Naive thymus-derived CD4-positive, alpha-beta T cell (primary cell): ENCODE measurements at regions of chr12 and their contacts with region 1.

Region 1: GRCh38 chr12:25052196-25052913 is 103.5 kb upstream of the BCAT1 start:
- DNase-seq: peak in 8 of 9 donors; percentile 51 to 92 (median 87)
- ATAC-seq: peak; percentile 85
- H3K4me3 ChIP-seq: peak overlapping the region; percentile 94
- H3K4me3 Mint-ChIP-seq: peak overlapping the region; percentile 88 to 100 (median 95)
- H3K27ac ChIP-seq: peak overlapping the region; percentile 76
- H3K27ac Mint-ChIP-seq: peak overlapping the region; percentile 92 to 100 (median 99)
- H3K4me1 ChIP-seq: peaks cover 22 to 25% of the 10 kb centered on the region in 2 donors
- H3K4me1 Mint-ChIP-seq: peaks cover 29 to 50% (median 42%) of the 10 kb centered on the region in 7 donors
- H3K27me3 ChIP-seq: no peaks in the 10 kb centered on the region
- H3K27me3 Mint-ChIP-seq: peaks cover 0 to 3% (median 0%) of the 10 kb centered on the region in 5 donors

Region 2: DNA sequence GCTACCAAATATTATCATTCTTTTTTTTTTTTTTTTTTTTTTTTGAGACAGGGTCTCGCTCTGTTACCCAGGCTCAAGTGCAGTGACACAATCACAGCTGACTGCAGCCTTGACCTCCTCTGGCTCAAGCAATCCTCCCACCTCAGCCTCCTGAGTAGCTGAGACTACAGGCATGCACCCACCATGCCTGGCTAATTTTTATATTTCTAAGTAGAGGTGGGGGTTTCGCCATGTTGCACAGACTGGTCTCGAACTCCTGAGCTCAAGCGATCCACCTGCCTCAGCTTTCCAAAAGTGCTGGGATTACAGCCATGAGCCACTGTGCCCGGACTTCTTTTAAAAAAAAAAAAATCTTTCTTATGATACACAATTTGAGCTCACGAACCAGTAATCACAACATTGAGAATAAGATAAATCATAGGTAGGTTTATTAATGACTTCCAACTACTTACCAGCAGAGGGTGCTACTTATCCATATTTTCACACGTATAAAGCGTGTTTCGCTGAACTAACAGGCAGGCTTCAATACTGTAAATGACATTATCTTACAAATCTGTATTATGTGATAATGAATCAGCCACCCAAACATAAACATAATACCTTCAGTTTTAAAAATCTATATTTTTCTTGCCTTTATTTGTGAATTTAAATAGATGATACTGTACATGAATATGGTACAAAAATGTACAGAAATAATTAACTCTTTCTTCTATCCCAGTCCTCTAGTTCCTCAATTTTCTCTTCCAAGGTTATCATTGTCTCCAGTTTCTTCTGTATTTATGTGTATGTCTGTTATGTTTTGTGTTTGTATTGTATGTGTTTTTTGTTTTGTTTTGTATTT is 60.9 kb before region 1 on chr12:
- CTCF ChIA-PET with region 1: interaction called, 3 read pairs
- POLR2A ChIA-PET with region 1: no interaction called
- intact Hi-C with region 1: loop called (anchors 1 to 2 kb)
- DNase-seq: peak in 7 of 9 donors; percentile 53 to 75 (median 64)
- ATAC-seq: peak; percentile 97
- H3K4me3 ChIP-seq: no peak overlapping the region
- H3K4me3 Mint-ChIP-seq: no peak overlapping the region
- H3K27ac ChIP-seq: no peak overlapping the region
- H3K27ac Mint-ChIP-seq: no peak overlapping the region
- H3K4me1 ChIP-seq: no peaks in the 10 kb centered on the region
- H3K4me1 Mint-ChIP-seq: peaks cover 0 to 2% (median 0%) of the 10 kb centered on the region in 7 donors
- H3K27me3 ChIP-seq: no peaks in the 10 kb centered on the region
- H3K27me3 Mint-ChIP-seq: peaks cover 0 to 7% (median 6%) of the 10 kb centered on the region in 5 donors

Region 3: GRCh38 chr12:25072906-25073650 is 20.7 kb after region 1 on chr12:
- CTCF ChIA-PET with region 1: interaction called, 4 read pairs
- POLR2A ChIA-PET with region 1: interaction called, 12 read pairs
- intact Hi-C with region 1: loop called (anchors 1 to 2 kb)
- DNase-seq: no peak
- ATAC-seq: no peak
- H3K4me3 ChIP-seq: no peak overlapping the region
- H3K4me3 Mint-ChIP-seq: no peak overlapping the region
- H3K27ac ChIP-seq: no peak overlapping the region
- H3K27ac Mint-ChIP-seq: no peak overlapping the region
- H3K4me1 ChIP-seq: no peaks in the 10 kb centered on the region
- H3K4me1 Mint-ChIP-seq: peaks cover 19 to 38% (median 23%) of the 10 kb centered on the region in 7 donors
- H3K27me3 ChIP-seq: no peaks in the 10 kb centered on the region
- H3K27me3 Mint-ChIP-seq: no peaks in the 10 kb centered on the region

Region 4: DNA sequence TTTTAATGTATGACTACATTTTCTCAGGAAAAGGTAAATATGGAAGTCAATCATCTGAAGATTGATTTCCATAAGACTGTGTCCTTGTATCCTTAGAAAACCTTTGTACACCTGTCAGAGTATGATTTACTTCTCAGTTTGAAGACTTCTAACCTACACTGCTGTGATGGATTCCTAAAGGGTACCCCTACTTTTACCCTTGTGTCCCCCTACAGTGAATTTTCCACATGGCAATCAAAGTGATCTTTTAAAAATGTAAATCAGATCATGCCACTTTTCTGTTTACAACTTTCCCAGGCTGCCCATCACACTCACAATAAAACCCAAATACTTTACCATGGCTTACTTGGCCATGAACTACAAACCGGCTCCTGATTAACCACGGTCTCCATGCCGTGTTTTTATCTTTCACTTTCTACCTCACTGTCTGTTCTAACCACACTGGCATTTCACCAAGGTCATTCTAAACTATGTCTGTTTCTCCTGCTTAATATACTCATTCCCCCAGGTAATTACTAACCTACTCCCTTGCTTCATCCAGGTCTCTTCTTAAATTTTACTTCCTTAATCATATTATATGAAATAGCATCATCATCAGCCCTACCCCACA is 134.5 kb after region 1 on chr12:
- CTCF ChIA-PET with region 1: no interaction called
- POLR2A ChIA-PET with region 1: interaction called, 6 read pairs
- intact Hi-C with region 1: loop called in 1 of 2 experiments (anchors 2 kb)
- DNase-seq: peak in 4 of 9 donors; percentile 20 to 37 (median 29)
- ATAC-seq: peak; percentile 74
- H3K4me3 ChIP-seq: peak overlapping the region; percentile 54
- H3K4me3 Mint-ChIP-seq: peak overlapping the region; percentile 77 to 93 (median 90)
- H3K27ac ChIP-seq: peak overlapping the region; percentile 54
- H3K27ac Mint-ChIP-seq: peak overlapping the region; percentile 72 to 99 (median 96)
- H3K4me1 ChIP-seq: peaks cover 3 to 16% of the 10 kb centered on the region in 2 donors
- H3K4me1 Mint-ChIP-seq: peaks cover 9 to 21% (median 18%) of the 10 kb centered on the region in 7 donors
- H3K27me3 ChIP-seq: no peaks in the 10 kb centered on the region
- H3K27me3 Mint-ChIP-seq: peaks cover 0 to 2% (median 0%) of the 10 kb centered on the region in 5 donors

Region 5: DNA sequence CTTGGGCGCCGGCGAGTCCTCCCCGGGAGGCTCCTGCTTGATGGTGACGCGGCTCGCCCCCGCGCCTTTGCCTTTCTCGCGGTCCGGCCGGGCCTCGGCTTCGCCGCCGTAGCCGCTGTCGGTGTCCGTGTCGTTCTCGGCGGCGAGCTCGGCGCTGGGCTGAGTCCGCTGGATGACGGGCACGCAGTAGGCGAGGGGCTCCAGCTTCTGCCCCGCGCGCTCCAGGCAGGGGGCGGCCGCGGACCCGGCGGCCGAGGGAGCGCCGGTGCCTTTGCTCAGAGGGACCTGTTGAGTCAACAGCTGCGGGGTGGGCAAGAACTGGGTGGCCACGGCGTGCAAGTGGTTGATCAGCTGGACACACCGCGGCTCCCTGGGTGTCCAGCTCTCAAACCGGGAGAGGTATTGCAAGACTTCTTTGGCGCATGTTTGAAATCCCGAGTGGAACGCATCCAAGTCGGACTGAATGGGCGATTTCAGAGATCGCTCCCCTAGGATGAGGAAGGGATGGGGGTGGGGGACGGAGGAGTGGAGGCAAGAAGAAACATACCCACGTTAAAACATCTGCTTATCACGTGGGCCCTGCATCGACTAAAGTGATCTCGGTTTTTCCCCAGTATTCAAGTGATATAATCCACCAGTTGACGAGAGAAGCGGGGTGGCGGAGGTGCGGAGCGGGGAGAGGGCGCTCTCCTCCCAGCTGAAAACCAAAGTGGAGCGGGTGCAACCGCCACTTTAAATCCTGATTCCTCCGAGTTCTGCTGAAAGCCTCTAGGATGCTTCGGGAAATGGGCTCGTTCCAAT is 1070.5 kb after region 1 on chr12:
- CTCF ChIA-PET with region 1: no interaction called
- POLR2A ChIA-PET with region 1: no interaction called
- intact Hi-C with region 1: loop called in 1 of 2 experiments (anchors 5 kb)
- DNase-seq: peak in 7 of 9 donors; percentile 16 to 51 (median 22)
- ATAC-seq: peak; percentile 44
- H3K4me3 ChIP-seq: peak overlapping the region; percentile 39
- H3K4me3 Mint-ChIP-seq: peak overlapping the region; percentile 80 to 91 (median 88)
- H3K27ac ChIP-seq: no peak overlapping the region
- H3K27ac Mint-ChIP-seq: peak overlapping the region in 3 of 9 donors; percentile 46 to 75 (median 58)
- H3K4me1 ChIP-seq: peaks cover 12 to 21% of the 10 kb centered on the region in 2 donors
- H3K4me1 Mint-ChIP-seq: peaks cover 22 to 49% (median 41%) of the 10 kb centered on the region in 7 donors
- H3K27me3 ChIP-seq: peaks cover 23 to 42% of the 10 kb centered on the region in 2 donors
- H3K27me3 Mint-ChIP-seq: peaks cover 67 to 86% (median 78%) of the 10 kb centered on the region in 5 donors